ENCODE measurements at regions of chrX and their contacts with region 1.

Region 1: DNA sequence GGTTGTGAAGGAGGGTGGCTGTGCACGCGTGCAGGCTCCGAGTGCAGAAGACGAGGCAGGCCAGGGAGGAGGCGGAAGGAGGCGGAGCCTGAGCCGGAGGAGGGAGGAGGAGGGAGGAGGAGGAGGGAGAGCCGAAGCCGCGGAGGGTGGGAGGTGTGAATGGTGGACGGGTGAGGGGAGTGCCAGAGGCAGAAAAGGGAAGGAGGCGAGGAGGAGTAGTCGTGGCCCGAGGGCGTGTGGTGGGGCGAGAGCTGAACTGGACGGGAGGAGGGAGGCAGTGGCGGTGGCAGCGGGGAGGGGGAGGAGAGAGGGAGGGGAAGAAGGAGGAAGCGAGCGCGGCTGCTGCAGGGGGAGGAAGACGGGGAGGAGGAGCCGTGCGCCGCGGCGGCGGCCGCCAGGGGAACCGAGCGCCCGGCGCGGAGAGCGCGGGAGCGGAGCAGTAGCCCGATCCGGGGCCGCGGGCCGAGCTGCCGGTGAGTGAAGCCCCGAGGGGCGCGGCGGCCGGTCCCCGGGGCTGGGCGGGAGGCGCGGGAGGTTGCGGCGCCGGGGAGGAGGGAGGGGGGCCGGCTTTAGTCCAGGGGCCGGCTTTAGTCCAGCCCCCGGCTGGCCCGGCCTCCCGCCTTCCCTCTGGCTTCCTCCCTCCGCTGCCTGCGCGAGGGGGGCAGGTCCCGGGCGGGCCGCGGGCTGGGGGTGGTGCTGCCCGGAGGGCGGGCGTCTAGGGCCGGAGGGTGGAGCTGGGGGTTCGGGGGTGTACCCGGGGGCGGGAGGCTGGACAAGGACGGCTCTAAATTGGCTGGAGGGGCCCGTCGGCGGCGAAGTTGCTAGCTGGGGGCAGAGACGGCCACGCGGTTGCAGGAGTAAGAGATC is at the start of gene TMEM164:
- DNase-seq: peak; percentile 93 to 94
- ATAC-seq: peak; percentile 95
- H3K4me3 ChIP-seq: peak within 1 kb of the TSS; percentile 29 to 76
- H3K27ac ChIP-seq: peak within 1 kb of the TSS in 1 of 2 donors; percentile 35
- H3K4me1 ChIP-seq: no peaks in the 10 kb centered on the region
- H3K27me3 ChIP-seq: no peaks in the 10 kb centered on the region
- total RNA-seq, gene TMEM164: 13.5 to 18.3 TPM

Region 2: DNA sequence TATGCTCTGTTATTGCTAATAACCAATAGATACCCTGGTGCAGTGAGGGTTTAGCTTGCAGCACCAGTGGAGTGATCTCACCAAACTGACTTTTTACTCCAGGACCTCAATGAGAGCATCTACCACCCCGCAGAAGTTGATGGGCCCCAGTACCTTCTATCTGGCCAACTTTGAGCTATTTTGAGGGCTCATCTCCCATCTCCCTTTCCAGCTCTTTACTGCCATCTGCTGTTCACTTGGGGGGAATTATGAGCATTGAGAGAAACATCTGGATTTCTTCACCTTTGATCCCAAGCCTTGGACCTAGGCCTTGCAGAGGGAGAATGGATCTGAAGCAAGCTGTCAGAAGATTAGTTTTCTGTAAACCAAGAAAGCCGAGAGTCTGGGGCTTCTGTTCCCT is 144.0 kb after region 1 on chrX:
- intact Hi-C with region 1: loop called in 1 of 2 experiments (anchors 10 kb)
- DNase-seq: no peak
- ATAC-seq: peak; percentile 77
- H3K4me3 ChIP-seq: no peak overlapping the region
- H3K27ac ChIP-seq: no peak overlapping the region
- H3K4me1 ChIP-seq: peaks cover 0 to 2% of the 10 kb centered on the region in 2 donors
- H3K27me3 ChIP-seq: no peaks in the 10 kb centered on the region

Region 3: GRCh38 chrX:110412971-110413721 is 410.6 kb after region 1 on chrX:
- intact Hi-C with region 1: loop called in 1 of 2 experiments (anchors 10 kb)
- DNase-seq: peak; percentile 74 to 87
- ATAC-seq: peak; percentile 82
- H3K4me3 ChIP-seq: no peak overlapping the region
- H3K27ac ChIP-seq: no peak overlapping the region
- H3K4me1 ChIP-seq: peaks cover 0 to 3% of the 10 kb centered on the region in 2 donors
- H3K27me3 ChIP-seq: no peaks in the 10 kb centered on the region